ENCODE measurements at regions of chr6 and their contacts with region 1.

Region 1: DNA sequence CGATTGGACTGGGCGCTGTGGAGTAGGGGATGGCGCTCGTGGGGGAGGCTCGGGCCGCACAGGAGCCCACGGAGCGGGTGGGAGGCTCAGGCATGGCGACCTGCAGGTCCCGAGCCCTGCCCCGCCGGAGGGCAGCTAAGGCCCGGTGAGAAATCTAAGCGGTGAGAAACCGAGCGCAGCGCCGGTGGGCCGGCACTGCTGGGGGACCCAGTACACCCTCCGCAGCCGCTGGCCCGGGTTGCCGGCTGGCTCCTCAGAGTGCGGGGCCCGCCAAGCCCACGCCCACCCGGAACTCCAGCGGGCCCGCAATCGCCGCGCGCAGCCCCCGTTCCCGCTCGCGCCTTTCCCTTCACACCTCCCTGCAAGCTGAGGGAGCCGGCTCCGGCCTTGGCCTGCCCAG is 59.7 kb upstream of the MYLIP start:
- DNase-seq: no peak
- H3K4me3 ChIP-seq: no peak overlapping the region
- H3K27ac ChIP-seq: no peak overlapping the region
- H3K4me1 ChIP-seq: no peaks in the 10 kb centered on the region
- H3K27me3 ChIP-seq: no peaks in the 10 kb centered on the region
- CTCF ChIP-seq: no peak
- POLR2A ChIP-seq: no peak

Region 2: DNA sequence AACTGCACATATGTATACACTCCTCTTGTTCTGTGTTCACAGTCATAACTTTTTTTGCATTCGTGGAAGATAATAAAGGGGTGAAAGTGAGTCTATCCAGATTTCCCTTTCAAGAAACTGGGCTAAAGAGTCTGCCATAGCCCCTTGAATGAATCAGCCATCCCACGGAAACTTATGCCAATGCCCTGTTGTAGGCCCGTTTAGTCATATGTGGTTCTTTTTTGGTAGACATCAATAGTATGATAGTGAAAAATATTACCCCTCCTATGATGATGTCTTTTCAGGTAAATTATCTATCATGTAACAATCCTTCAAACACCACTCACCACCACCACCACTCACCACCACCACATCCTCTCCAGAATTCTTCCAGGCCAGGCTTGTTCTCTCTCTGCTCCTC is 40.3 kb before region 1 on chr6:
- intact Hi-C with region 1: no loop called
- DNase-seq: no peak
- H3K4me3 ChIP-seq: no peak overlapping the region
- H3K27ac ChIP-seq: no peak overlapping the region
- H3K4me1 ChIP-seq: no peaks in the 10 kb centered on the region
- H3K27me3 ChIP-seq: no peaks in the 10 kb centered on the region
- CTCF ChIP-seq: no peak
- POLR2A ChIP-seq: no peak

Region 3: GRCh38 chr6:16153211-16153820 is 84.1 kb after region 1 on chr6:
- intact Hi-C with region 1: loop called (anchors 2 kb)
- DNase-seq: no peak
- H3K4me3 ChIP-seq: no peak overlapping the region
- H3K27ac ChIP-seq: no peak overlapping the region
- H3K4me1 ChIP-seq: no peaks in the 10 kb centered on the region
- H3K27me3 ChIP-seq: no peaks in the 10 kb centered on the region
- CTCF ChIP-seq: no peak
- POLR2A ChIP-seq: no peak

Region 4: DNA sequence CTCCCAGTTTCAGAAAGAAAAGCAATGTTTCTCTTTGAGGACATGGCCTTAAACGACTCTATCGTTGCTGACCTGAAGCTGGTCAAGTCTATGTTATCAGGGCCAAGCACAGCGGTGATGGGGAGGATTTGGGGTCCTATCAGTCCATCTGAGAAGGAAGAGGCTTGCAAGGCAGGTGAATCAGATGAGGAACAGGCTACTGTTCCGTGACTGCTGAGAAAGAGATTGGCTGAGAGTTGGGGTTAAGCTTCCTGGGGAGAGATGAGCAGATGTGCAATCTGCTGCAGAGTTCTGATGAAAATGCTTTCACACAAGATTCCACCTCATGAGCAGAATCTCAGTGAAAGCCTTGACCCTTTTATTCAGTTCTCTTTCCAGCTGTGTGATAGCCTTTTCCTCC is 864.3 kb after region 1 on chr6:
- intact Hi-C with region 1: no loop called
- DNase-seq: no peak
- H3K4me3 ChIP-seq: no peak overlapping the region
- H3K27ac ChIP-seq: no peak overlapping the region
- H3K4me1 ChIP-seq: no peaks in the 10 kb centered on the region
- H3K27me3 ChIP-seq: no peaks in the 10 kb centered on the region
- CTCF ChIP-seq: no peak
- POLR2A ChIP-seq: no peak